ENCODE measurements at regions of chr12 and their contacts with region 1.

Region 1: DNA sequence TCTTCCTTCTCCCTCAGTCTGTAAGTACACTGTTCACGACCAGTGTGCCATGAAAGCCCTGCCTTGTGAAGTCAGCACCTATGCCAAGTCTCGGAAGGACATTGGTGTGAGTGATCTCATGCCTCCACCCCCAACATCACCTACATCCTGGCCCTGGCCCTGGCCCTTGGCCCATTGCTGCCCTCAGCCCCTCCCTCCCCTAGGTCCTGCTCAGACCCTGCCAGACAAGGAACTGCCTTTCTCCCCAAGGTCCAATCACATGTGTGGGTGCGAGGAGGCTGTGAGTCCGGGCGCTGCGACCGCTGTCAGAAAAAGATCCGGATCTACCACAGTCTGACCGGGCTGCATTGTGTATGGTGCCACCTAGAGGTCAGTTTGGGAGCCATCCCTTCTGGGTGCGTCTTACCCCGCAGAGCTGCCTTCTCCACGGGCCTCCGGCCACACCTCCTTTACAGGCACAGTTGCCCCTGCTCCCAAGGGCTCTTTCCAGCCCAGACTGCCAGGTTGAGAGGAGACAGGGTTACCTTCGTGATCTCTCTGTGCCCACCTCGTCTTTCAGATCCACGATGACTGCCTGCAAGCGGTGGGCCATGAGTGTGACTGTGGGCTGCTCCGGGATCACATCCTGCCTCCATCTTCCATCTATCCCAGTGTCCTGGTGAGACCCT is 9.2 kb downstream of the DGKA start:
- DNase-seq: peak; percentile 90
- ATAC-seq: peak; percentile 77
- H3K4me3 Mint-ChIP-seq: peak overlapping the region; percentile 1
- H3K27ac Mint-ChIP-seq: peak overlapping the region; percentile 58
- H3K4me1 Mint-ChIP-seq: peaks cover 75% of the 10 kb centered on the region
- H3K27me3 Mint-ChIP-seq: no peaks in the 10 kb centered on the region

Region 2: GRCh38 chr12:55812088-55812487 is 128.1 kb before region 1 on chr12:
- CTCF ChIA-PET with region 1: interaction called, 17 read pairs
- POLR2A ChIA-PET with region 1: interaction called, 4 read pairs
- intact Hi-C with region 1: no loop called
- DNase-seq: no peak
- ATAC-seq: no peak
- H3K4me3 Mint-ChIP-seq: no peak overlapping the region
- H3K27ac Mint-ChIP-seq: peak overlapping the region; percentile 44
- H3K4me1 Mint-ChIP-seq: peaks cover 43% of the 10 kb centered on the region
- H3K27me3 Mint-ChIP-seq: no peaks in the 10 kb centered on the region

Region 3: GRCh38 chr12:55823419-55823818 is 116.8 kb before region 1 on chr12:
- CTCF ChIA-PET with region 1: interaction called, 17 read pairs
- POLR2A ChIA-PET with region 1: interaction called, 3 read pairs
- intact Hi-C with region 1: no loop called
- DNase-seq: no peak
- ATAC-seq: no peak
- H3K4me3 Mint-ChIP-seq: no peak overlapping the region
- H3K27ac Mint-ChIP-seq: peak overlapping the region; percentile 85
- H3K4me1 Mint-ChIP-seq: peaks cover 72% of the 10 kb centered on the region
- H3K27me3 Mint-ChIP-seq: no peaks in the 10 kb centered on the region

Measured in activated CD4-positive, alpha-beta T cell treated with anti-CD3 and anti-CD28 coated beads for 36 hours (primary cell).